Ascending aorta (tissue), 2 donors: ENCODE measurements at regions of chr4 and their contacts with region 1.

Region 1: GRCh38 chr4:56637791-56638190 is 43.3 kb downstream of the HOPX start:
- DNase-seq: no peak
- H3K4me3 ChIP-seq: no peak overlapping the region
- H3K27ac ChIP-seq: no peak overlapping the region
- H3K4me1 ChIP-seq: no peaks in the 10 kb centered on the region
- H3K27me3 ChIP-seq: no peaks in the 10 kb centered on the region
- CTCF ChIP-seq: no peak

Region 2: GRCh38 chr4:56099378-56099786 is 538.4 kb before region 1 on chr4:
- intact Hi-C with region 1: no loop called
- DNase-seq: no peak
- H3K4me3 ChIP-seq: no peak overlapping the region
- H3K27ac ChIP-seq: no peak overlapping the region
- H3K4me1 ChIP-seq: no peaks in the 10 kb centered on the region
- H3K27me3 ChIP-seq: no peaks in the 10 kb centered on the region
- CTCF ChIP-seq: no peak

Region 3: GRCh38 chr4:56619816-56620215 is 18.0 kb before region 1 on chr4:
- intact Hi-C with region 1: loop called (anchors 1 kb)
- DNase-seq: no peak
- H3K4me3 ChIP-seq: no peak overlapping the region
- H3K27ac ChIP-seq: no peak overlapping the region
- H3K4me1 ChIP-seq: no peaks in the 10 kb centered on the region
- H3K27me3 ChIP-seq: no peaks in the 10 kb centered on the region
- CTCF ChIP-seq: no peak